ENCODE measurements at regions of chr13 and their contacts with region 1.

Region 1: GRCh38 chr13:101127741-101128353 is 288.5 kb downstream of the NALCN start:
- DNase-seq: no peak
- H3K4me3 ChIP-seq: no peak overlapping the region
- H3K27ac ChIP-seq: no peak overlapping the region
- H3K4me1 ChIP-seq: no peaks in the 10 kb centered on the region
- H3K27me3 ChIP-seq: no peaks in the 10 kb centered on the region
- CTCF ChIP-seq: peak in 3 of 4 experiments; percentile 29 to 71 (median 32)
- EP300 ChIP-seq: no peak
- POLR2A ChIP-seq: no peak

Region 2: GRCh38 chr13:100573121-100573520 is 554.7 kb before region 1 on chr13:
- intact Hi-C with region 1: loop called (anchors 10 kb)
- DNase-seq: peak; percentile 77
- H3K4me3 ChIP-seq: no peak overlapping the region
- H3K27ac ChIP-seq: no peak overlapping the region
- H3K4me1 ChIP-seq: no peaks in the 10 kb centered on the region
- H3K27me3 ChIP-seq: no peaks in the 10 kb centered on the region
- CTCF ChIP-seq: peak; percentile 6 to 60 (median 52)
- EP300 ChIP-seq: no peak
- POLR2A ChIP-seq: no peak

Region 3: DNA sequence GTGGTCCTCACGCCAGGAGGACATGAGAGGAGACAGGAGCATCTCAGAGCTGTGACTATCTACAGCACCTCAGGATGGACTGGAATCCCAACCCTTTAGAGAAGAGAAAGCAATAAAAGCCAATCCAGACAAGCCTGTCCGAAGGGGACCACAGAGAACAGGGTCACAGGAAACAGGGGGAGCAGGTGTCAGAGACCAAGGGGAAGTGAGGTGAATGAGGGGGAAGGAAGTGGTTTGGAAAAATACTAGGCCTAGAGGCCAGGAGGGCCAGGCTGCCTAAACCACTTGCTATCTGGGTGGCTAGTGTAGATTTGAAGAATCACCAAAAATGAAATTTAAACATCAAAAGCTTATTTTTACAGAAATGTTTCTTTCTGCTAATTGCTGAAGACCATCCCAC is 469.5 kb before region 1 on chr13:
- intact Hi-C with region 1: no loop called
- DNase-seq: no peak
- H3K4me3 ChIP-seq: no peak overlapping the region
- H3K27ac ChIP-seq: no peak overlapping the region
- H3K4me1 ChIP-seq: no peaks in the 10 kb centered on the region
- H3K27me3 ChIP-seq: no peaks in the 10 kb centered on the region
- CTCF ChIP-seq: no peak
- EP300 ChIP-seq: no peak
- POLR2A ChIP-seq: no peak

Region 4: GRCh38 chr13:100721885-100722512 is 405.8 kb before region 1 on chr13:
- intact Hi-C with region 1: loop called (anchors 5 kb)
- DNase-seq: no peak
- H3K4me3 ChIP-seq: no peak overlapping the region
- H3K27ac ChIP-seq: no peak overlapping the region
- H3K4me1 ChIP-seq: no peaks in the 10 kb centered on the region
- H3K27me3 ChIP-seq: no peaks in the 10 kb centered on the region
- CTCF ChIP-seq: peak in 3 of 4 experiments; percentile 17 to 62 (median 60)
- EP300 ChIP-seq: no peak
- POLR2A ChIP-seq: no peak

Region 5: GRCh38 chr13:101955764-101956163 is 827.9 kb after region 1 on chr13:
- intact Hi-C with region 1: no loop called
- DNase-seq: no peak
- H3K4me3 ChIP-seq: no peak overlapping the region
- H3K27ac ChIP-seq: no peak overlapping the region
- H3K4me1 ChIP-seq: no peaks in the 10 kb centered on the region
- H3K27me3 ChIP-seq: no peaks in the 10 kb centered on the region
- CTCF ChIP-seq: no peak
- EP300 ChIP-seq: no peak
- POLR2A ChIP-seq: no peak

Measured in sigmoid colon (tissue), 7 donors.